OCI-LY7 (cell line): ENCODE measurements at regions of chr13 and their contacts with region 1.

Region 1: GRCh38 chr13:48505597-48506091 is 27.2 kb downstream of the RCBTB2 start:
- DNase-seq: peak; percentile 88
- H3K4me3 ChIP-seq: peak overlapping the region; percentile 46
- H3K27ac ChIP-seq: peak overlapping the region; percentile 20
- H3K4me1 ChIP-seq: peaks cover 53% of the 10 kb centered on the region
- CTCF ChIP-seq: no peak

Region 2: GRCh38 chr13:48393698-48394085 is 112.0 kb before region 1 on chr13:
- CTCF ChIA-PET with region 1: no interaction called
- POLR2A ChIA-PET with region 1: no interaction called
- intact Hi-C with region 1: no loop called
- DNase-seq: no peak
- H3K4me3 ChIP-seq: no peak overlapping the region
- H3K27ac ChIP-seq: no peak overlapping the region
- H3K4me1 ChIP-seq: no peaks in the 10 kb centered on the region
- CTCF ChIP-seq: no peak

Region 3: DNA sequence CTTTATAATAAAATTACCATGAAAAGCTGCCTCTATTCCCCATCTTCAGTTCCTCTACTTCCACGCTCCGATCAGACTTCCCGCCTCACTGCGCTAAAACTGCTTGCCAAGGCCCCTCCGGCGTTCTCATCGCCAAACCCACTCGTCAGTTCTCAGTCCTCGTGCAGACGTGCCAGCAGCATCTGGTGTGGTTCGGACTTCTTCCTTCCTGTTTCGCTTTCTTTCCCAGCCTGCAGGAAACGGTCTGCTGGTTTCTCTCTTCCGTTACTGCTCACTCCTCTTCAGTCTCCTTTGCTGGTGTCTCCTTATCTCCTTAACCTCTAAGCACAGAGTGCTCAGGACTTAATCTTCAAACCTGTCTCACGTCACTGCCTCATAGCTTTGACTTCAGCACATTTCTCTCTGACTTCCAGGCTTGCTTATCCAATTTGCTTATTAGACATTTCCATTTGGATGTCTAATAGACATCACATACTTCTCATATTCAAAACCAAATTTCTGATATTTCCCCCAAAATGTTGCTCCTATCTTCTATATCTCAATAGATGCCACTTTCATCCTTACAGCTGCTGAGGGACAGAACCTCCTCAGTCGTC is 13.1 kb before region 1 on chr13:
- CTCF ChIA-PET with region 1: no interaction called
- POLR2A ChIA-PET with region 1: interaction called, 7 read pairs
- intact Hi-C with region 1: loop called (anchors 1 kb)
- DNase-seq: peak; percentile 89
- H3K4me3 ChIP-seq: peak overlapping the region; percentile 61
- H3K27ac ChIP-seq: peak overlapping the region; percentile 68
- H3K4me1 ChIP-seq: peaks cover 51% of the 10 kb centered on the region
- CTCF ChIP-seq: no peak

Region 4: DNA sequence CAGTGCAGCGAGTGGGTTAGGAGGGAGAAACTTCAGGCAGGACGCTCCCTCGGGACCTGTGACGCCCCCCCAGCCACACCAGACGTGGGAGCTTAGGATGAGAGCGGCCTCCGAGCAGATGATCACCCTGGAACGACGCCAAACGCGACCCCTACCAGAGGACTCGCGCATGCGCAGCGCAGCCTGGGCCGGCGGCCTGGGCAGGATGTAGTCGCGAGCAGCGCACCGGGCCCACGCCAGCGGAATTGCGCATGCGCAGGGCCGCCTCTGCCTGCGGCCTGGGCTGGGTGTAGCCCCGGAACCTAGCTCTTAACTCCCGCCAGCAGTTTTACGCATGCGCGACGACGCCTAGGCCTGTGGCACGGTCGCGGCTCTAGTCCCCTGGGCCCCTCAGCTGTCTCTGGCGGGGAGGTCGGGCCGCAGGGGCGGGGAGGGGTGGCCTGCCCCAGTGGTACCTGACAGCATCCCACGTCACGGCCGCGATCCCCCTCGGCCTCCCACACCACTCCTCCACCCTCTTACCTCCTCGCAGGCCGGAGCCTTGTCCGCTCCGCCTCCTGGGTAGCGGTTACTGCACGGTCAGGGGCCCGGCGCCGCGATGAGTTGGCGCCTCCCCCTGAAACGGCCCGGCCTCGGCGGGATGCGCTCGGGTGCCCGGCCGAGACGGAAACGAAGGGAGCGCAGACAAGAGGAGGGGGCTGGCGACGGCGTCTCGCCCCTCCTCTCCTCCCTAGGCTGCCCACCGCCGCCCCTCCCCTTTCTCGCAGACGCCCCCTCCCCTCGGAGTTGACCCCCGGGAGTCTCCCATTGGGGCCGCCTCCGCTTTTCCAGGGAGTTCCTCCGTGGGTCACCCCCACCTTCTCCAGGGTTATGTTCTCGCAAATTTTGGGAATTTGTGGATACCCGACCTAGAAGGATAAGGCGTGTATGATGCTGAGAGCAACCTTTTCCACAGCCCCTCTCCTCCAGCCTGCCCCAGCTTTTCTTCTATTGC is 27.2 kb after region 1 on chr13 and contains the start of gene RCBTB2:
- CTCF ChIA-PET with region 1: interaction called, 4 read pairs
- POLR2A ChIA-PET with region 1: interaction called, 8 read pairs
- intact Hi-C with region 1: loop called (anchors 2 kb)
- DNase-seq: peak; percentile 99
- H3K4me3 ChIP-seq: peak within 1 kb of the TSS; percentile 73
- H3K27ac ChIP-seq: peak within 1 kb of the TSS; percentile 80
- H3K4me1 ChIP-seq: peaks cover 59% of the 10 kb centered on the region
- CTCF ChIP-seq: no peak
- total RNA-seq, gene RCBTB2: 4.4 and 9.0 TPM in 2 replicates